Activated T-helper 2 cell treated with anti-CD3 and anti-CD28 coated beads, Interferon-gamma antibody, Interleukin-2, Interleukin-4, amounts not matched to agents 10 μg/mL and 5 μg/mL and 100 μg/mL, durations not matched to agents 14 hours and 24 hours and 36 hours (primary cell): ENCODE measurements at regions of chr10 and their contacts with region 1.

Region 1: DNA sequence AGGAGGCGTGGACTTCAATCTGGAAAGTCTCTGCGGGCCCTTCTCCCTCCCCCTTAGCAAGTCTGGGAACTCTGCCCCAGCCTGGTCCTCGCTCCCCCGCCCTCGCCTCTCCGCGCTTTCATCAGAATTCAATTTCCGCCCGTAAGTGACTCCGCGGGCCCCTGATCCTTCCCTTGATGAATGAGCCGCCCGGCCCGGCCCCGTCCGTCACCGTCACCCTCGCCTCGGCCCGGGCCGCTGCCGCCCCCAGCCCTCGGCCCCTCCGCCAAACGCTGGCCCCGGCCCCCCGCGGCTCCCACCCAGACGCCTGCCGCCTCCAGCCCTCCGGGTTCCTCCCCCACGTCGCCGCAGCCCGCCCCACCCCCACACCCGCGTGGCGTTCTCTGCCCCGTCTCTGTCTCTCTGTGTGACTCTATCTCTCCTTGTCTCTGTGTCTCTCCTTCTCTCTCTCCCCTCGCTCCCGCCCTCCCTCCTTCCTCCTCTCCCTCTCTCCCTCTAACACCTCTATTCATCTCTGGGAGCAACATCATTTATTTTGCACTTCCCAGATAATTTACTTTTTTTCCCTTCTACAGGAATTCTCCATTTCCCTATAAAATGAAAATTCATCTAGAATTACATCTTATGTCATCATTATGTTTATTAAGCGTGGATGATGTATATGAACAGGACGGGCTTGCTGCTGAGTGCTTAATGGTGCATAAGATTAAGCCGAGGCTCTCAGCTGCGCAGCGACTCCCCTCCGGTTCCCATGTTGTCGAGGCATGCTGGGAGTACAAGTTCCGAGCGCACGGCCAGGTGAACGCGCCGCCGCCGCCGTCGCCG is 91.2 kb upstream of the PAX2 start:
- DNase-seq: no peak
- H3K4me3 Mint-ChIP-seq: peak overlapping the region; percentile 73
- H3K27ac Mint-ChIP-seq: no peak overlapping the region
- H3K4me1 Mint-ChIP-seq: peaks cover 24% of the 10 kb centered on the region
- H3K27me3 Mint-ChIP-seq: peaks cover 63% of the 10 kb centered on the region

Region 2: DNA sequence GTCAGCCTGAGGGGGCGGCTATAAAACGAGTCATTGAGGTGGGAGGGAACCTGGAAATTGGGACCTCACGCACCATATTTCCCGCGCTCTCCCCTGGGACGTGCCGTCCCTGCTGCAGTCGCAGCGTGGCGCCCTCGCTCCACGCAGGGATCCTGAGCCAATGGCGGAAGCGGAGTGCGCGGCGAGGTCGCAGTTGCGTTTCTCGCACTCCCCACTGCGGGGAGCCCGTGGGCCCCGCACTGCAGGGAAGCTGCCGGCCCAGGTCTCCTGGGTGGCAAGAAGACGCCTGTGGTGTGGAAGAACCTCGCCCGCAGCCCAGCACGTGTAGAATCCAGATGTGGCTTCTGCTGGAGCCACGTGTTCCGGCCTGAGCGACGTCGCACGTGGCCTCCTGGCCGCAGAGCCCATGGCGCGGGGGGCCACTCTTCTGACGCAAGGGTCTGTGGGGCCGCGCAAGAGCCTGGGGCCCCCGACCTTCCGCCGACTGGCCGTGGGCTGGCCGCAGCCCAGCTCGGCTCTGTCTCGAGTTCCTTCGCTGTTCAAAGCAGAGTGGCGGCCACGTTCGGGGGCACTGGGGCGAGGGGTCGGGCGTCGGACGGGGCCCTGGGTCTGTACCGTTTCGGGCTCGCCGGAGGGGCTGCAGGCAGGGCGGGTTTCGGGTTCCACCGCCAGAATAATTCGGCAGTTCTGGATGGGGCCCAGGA is 92.0 kb before region 1 on chr10:
- intact Hi-C with region 1: loop called (anchors 10 kb)
- DNase-seq: peak; percentile 73
- H3K4me3 Mint-ChIP-seq: no peak overlapping the region
- H3K27ac Mint-ChIP-seq: no peak overlapping the region
- H3K4me1 Mint-ChIP-seq: peaks cover 12% of the 10 kb centered on the region
- H3K27me3 Mint-ChIP-seq: peaks cover 36% of the 10 kb centered on the region

Region 3: GRCh38 chr10:100827819-100828737 is 173.9 kb after region 1 on chr10:
- intact Hi-C with region 1: loop called (anchors 10 kb)
- DNase-seq: no peak
- H3K4me3 Mint-ChIP-seq: peak overlapping the region; percentile 75
- H3K27ac Mint-ChIP-seq: peak overlapping the region; percentile 5
- H3K4me1 Mint-ChIP-seq: peaks cover 21% of the 10 kb centered on the region
- H3K27me3 Mint-ChIP-seq: peaks cover 75% of the 10 kb centered on the region

Region 4: GRCh38 chr10:101141616-101142532 is 487.7 kb after region 1 on chr10:
- intact Hi-C with region 1: loop called (anchors 5 kb)
- DNase-seq: peak; percentile 66
- H3K4me3 Mint-ChIP-seq: no peak overlapping the region
- H3K27ac Mint-ChIP-seq: no peak overlapping the region
- H3K4me1 Mint-ChIP-seq: peaks cover 6% of the 10 kb centered on the region
- H3K27me3 Mint-ChIP-seq: peaks cover 86% of the 10 kb centered on the region

Region 5: GRCh38 chr10:101228153-101228973 is 574.2 kb after region 1 on chr10:
- intact Hi-C with region 1: loop called (anchors 10 kb)
- DNase-seq: no peak
- H3K4me3 Mint-ChIP-seq: no peak overlapping the region
- H3K27ac Mint-ChIP-seq: peak overlapping the region; percentile 12
- H3K4me1 Mint-ChIP-seq: peaks cover 12% of the 10 kb centered on the region
- H3K27me3 Mint-ChIP-seq: peaks cover 71% of the 10 kb centered on the region